Gastrocnemius medialis (tissue), 4 donors: ENCODE measurements at regions of chr14 and their contacts with region 1.

Region 1: GRCh38 chr14:100192672-100193416 is 33.4 kb upstream of the DEGS2 start:
- DNase-seq: peak; percentile 98 to 99
- ATAC-seq: peak; percentile 96 to 98
- H3K4me3 ChIP-seq: peak overlapping the region; percentile 54 to 67 (median 60)
- H3K27ac ChIP-seq: peak overlapping the region; percentile 82 to 92 (median 84)
- H3K4me1 ChIP-seq: peaks cover 5 to 9% of the 10 kb centered on the region in 2 donors
- H3K27me3 ChIP-seq: no peaks in the 10 kb centered on the region
- CTCF ChIP-seq: peak; percentile 56 to 96 (median 92)
- POLR2A ChIP-seq: peak in 1 of 2 donors; percentile 61

Region 2: DNA sequence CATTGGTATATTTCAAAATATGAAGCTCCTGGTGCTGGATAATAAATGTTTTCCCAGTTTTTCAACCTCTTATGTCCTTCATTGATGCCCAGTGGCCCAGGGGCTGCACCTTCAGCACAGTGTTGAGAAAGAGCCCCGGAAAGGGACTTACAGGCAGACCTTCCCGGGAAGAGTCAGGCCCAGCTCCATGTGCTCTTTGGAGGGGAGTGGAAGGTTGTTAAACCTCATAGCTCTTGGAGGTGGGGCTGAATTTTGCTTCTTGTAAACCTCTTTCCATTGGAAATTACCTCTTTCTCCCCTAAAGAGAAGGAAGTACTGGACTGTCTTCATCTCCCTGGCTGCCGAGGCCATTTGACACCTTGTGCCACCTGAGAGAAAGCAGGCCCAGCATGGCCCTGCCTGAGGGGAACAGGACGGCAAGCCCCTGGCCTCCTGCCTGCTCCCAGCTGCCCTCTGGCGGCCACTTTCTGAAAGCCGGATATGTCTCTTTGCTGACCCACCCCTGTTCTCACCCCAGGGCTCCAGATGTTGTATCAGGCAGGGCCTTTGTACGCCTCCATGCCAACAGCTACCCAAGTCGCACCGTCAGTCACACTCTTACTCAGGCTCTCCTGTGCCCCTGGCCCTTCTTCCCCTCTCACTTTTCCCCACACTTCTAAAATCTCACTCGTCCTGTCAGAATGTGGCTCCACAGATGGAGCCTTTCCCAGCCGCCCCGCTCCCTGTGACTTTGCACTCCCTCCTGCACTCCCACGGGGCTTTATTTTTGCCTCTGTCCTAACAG is 84.6 kb before region 1 on chr14:
- in situ Hi-C with region 1: no loop called
- intact Hi-C with region 1: loop called (anchors 1 kb)
- DNase-seq: peak; percentile 44 to 70
- ATAC-seq: peak; percentile 72 to 93
- H3K4me3 ChIP-seq: no peak overlapping the region
- H3K27ac ChIP-seq: peak overlapping the region in 1 of 4 donors; percentile 28
- H3K4me1 ChIP-seq: peaks cover 9 to 39% of the 10 kb centered on the region in 2 donors
- H3K27me3 ChIP-seq: no peaks in the 10 kb centered on the region
- CTCF ChIP-seq: peak; percentile 65 to 87 (median 84)
- POLR2A ChIP-seq: no peak

Region 3: GRCh38 chr14:100213956-100214774 is 21.3 kb after region 1 on chr14:
- in situ Hi-C with region 1: no loop called
- intact Hi-C with region 1: loop called (anchors 1 kb)
- DNase-seq: peak; percentile 64 to 80
- ATAC-seq: peak; percentile 94 to 95
- H3K4me3 ChIP-seq: peak overlapping the region; percentile 74 to 97 (median 94)
- H3K27ac ChIP-seq: peak overlapping the region; percentile 85 to 97 (median 96)
- H3K4me1 ChIP-seq: peaks cover 6 to 7% of the 10 kb centered on the region in 2 donors
- H3K27me3 ChIP-seq: no peaks in the 10 kb centered on the region
- CTCF ChIP-seq: no peak
- POLR2A ChIP-seq: peak; percentile 73 to 74

Region 4: DNA sequence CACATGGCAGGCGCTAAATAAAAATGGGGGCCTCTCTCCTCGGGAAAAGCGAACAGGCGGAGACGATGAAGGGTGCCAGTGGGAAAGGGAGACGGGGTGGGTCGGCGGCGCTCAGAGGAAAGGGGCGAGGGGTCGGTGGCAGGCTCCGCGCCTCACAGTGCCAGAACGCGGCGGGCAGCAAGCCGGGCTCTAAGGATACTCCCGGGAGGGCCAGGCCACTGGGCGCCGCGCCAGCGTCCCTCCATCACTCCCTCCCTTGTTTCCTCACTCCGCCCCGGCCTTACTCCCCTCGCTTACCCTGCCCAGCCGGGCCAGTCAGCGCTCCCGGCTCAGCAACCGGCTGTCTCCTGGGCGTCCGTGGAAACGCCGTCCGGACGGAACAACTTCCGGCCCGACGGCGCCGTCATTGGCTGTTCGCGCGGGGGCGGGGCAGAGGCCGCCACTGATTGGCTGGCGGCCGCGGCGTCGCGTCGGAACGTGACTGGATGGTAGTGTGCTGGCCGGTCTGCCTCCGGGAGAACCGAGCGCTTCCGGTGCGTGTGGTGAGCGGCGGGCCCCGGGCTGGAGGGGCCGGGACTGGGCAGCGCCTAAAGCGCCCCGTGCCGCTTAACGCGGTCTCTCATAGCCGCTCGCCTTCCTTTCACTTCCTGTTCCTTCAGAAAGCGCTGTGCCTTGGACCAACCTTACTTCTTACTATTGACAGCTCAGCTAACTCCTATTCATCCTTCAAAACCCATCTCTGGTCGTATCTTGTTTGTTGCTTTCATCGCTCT is 183.3 kb after region 1 on chr14:
- in situ Hi-C with region 1: no loop called
- intact Hi-C with region 1: loop called (anchors 2 kb)
- DNase-seq: peak; percentile 85 to 92
- ATAC-seq: peak; percentile 86 to 90
- H3K4me3 ChIP-seq: peak within 1 kb of the TSS; percentile 73 to 90 (median 85)
- H3K27ac ChIP-seq: peak within 1 kb of the TSS; percentile 80 to 88 (median 86)
- H3K4me1 ChIP-seq: peaks cover 20 to 22% of the 10 kb centered on the region in 2 donors
- H3K27me3 ChIP-seq: no peaks in the 10 kb centered on the region
- CTCF ChIP-seq: no peak
- POLR2A ChIP-seq: peak; percentile 78 to 79

Region 5: DNA sequence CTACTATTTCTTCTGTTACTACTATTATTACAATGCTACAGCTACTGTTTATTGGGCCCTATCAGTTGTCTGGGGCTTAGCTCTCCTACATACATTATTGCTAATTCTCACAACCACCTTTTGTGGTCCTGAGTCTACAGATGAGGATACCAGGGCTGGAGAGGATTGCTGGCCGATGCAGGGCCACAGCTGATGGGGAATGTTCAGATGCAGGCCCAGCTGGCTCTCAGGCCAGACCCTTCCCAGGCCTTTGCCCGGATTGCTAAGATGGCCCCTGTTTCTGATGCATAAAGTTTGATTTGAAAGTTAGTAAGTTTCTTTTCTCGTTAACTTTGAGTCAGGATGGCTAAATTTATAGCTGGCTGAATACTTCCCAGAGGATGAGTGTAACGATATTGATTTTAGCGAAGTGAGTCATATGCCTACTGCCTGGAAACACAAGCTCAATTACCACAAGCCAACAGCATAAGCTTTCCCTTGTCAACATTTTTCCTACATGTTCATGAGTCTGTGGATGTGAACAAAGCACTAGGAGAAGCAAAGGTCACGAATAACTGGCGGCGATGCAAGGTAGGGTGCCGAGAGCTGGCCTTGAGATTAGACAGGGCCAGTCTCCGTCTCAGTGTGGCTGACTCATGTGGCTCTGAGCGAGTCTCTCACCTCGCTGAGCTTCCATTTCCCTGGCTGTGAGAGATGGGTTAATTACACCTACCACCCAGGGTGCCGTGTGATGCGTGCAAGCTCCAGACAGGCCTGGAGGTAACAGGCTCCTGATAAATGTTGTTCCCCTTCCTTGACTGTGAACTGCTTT is 283.4 kb after region 1 on chr14:
- in situ Hi-C with region 1: no loop called
- intact Hi-C with region 1: no loop called
- DNase-seq: peak; percentile 28 to 57
- ATAC-seq: peak; percentile 69 to 87
- H3K4me3 ChIP-seq: no peak overlapping the region
- H3K27ac ChIP-seq: peak overlapping the region; percentile 64 to 82 (median 74)
- H3K4me1 ChIP-seq: peaks cover 16 to 22% of the 10 kb centered on the region in 2 donors
- H3K27me3 ChIP-seq: no peaks in the 10 kb centered on the region
- CTCF ChIP-seq: no peak
- POLR2A ChIP-seq: no peak